Heart right ventricle (tissue), 16 donors: ENCODE measurements at regions of chr6 and their contacts with region 1.

Region 1: GRCh38 chr6:51959744-51960383 is 127.5 kb downstream of the PKHD1 start:
- DNase-seq: peak; percentile 31 to 48
- ATAC-seq: peak in 1 of 8 donors; percentile 52
- H3K4me3 ChIP-seq: no peak overlapping the region
- H3K27ac ChIP-seq: no peak overlapping the region
- H3K4me1 ChIP-seq: no peaks in the 10 kb centered on the region
- H3K27me3 ChIP-seq: peaks cover 0 to 31% (median 12%) of the 10 kb centered on the region in 7 donors
- CTCF ChIP-seq: peak; percentile 21 to 74 (median 63)

Region 2: GRCh38 chr6:51314965-51315364 is 644.9 kb before region 1 on chr6:
- intact Hi-C with region 1: no loop called
- DNase-seq: no peak
- ATAC-seq: no peak
- H3K4me3 ChIP-seq: no peak overlapping the region
- H3K27ac ChIP-seq: no peak overlapping the region
- H3K4me1 ChIP-seq: no peaks in the 10 kb centered on the region
- H3K27me3 ChIP-seq: peaks cover 0 to 1% (median 0%) of the 10 kb centered on the region in 7 donors
- CTCF ChIP-seq: no peak

Region 3: DNA sequence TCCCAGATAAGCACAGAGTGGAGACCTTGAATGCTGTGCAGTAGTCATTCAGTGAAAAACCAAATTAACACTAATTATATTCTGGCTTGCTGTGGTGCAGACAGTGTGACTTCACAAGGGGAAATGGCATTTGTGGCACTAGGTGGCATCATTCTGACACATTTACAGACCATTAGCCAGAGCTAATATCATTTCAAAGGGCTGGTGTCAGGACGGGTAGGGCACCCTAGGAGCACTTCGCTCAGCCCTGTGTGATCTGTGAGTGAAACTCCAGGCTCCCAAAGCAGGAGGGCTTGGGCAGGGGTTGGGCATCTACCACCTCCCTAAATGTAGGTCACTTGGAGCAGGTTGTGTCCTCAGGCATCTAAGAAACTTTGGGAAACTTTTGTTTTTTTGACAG is 428.2 kb before region 1 on chr6:
- intact Hi-C with region 1: loop called in 3 of 10 experiments (anchors 5 to 10 kb)
- DNase-seq: no peak
- ATAC-seq: peak in 5 of 8 donors; percentile 48 to 73 (median 68)
- H3K4me3 ChIP-seq: no peak overlapping the region
- H3K27ac ChIP-seq: no peak overlapping the region
- H3K4me1 ChIP-seq: no peaks in the 10 kb centered on the region
- H3K27me3 ChIP-seq: no peaks in the 10 kb centered on the region
- CTCF ChIP-seq: peak in 7 of 9 donors; percentile 9 to 50 (median 39)

Region 4: DNA sequence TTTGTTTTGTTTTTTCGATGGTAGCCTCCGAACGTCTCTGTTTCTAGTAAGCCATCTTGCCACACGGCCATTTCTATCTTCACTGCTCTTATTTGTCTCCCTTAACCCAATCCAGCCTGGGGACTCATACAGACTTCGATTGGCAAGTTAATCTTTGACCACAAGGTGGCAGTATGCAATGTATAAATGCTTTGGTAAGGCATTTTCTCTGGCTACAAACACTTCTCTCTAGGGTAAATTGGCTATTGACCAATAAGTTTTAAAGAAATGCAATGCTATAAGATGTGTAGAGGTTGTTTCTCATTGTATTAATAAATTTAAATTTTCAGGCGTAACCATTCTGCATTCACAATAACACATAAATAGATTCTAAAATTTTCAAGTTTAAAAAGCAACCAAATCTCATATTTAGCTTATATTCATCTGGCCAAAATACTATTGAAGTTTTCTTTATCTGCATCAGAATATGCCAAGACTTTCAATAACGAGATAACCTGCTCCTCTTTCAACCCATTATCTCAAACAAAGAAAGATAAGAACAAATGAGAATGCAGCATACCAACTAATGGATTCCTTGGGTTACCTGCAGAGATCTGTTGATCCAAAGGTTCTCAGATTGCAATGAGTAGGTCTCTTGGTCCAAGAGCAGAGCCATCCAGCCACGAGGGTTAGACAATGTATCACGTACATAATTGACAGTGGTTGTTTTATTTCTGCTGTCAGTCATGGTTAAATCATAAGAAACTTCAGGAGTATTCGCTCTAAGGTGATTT is 104.4 kb before region 1 on chr6:
- intact Hi-C with region 1: loop called in 1 of 10 experiments (anchors 10 kb)
- DNase-seq: no peak
- ATAC-seq: no peak
- H3K4me3 ChIP-seq: no peak overlapping the region
- H3K27ac ChIP-seq: no peak overlapping the region
- H3K4me1 ChIP-seq: no peaks in the 10 kb centered on the region
- H3K27me3 ChIP-seq: peaks cover 0 to 22% (median 10%) of the 10 kb centered on the region in 7 donors
- CTCF ChIP-seq: peak; percentile 20 to 68 (median 59)

Region 5: GRCh38 chr6:52186480-52186879 is 226.6 kb after region 1 on chr6:
- intact Hi-C with region 1: no loop called
- DNase-seq: no peak
- ATAC-seq: no peak
- H3K4me3 ChIP-seq: no peak overlapping the region
- H3K27ac ChIP-seq: no peak overlapping the region
- H3K4me1 ChIP-seq: no peaks in the 10 kb centered on the region
- H3K27me3 ChIP-seq: peaks cover 0 to 12% (median 0%) of the 10 kb centered on the region in 7 donors
- CTCF ChIP-seq: no peak